Heart left ventricle (tissue), 16 donors: ENCODE measurements at regions of chrX and their contacts with region 1.

Region 1: GRCh38 chrX:19334945-19335626 is 8.6 kb upstream of the PDHA1 start:
- DNase-seq: no peak
- ATAC-seq: no peak
- H3K4me3 ChIP-seq: no peak overlapping the region
- H3K27ac ChIP-seq: no peak overlapping the region
- H3K4me1 ChIP-seq: peaks cover 0 to 10% (median 0%) of the 10 kb centered on the region in 12 donors
- H3K27me3 ChIP-seq: no peaks in the 10 kb centered on the region
- CTCF ChIP-seq: peak in 2 of 12 donors; percentile 9 to 19
- POLR2A ChIP-seq: no peak

Region 2: GRCh38 chrX:18390941-18391538 is 944.0 kb before region 1 on chrX:
- intact Hi-C with region 1: loop called (anchors 1 to 10 kb)
- DNase-seq: peak; percentile 24 to 72 (median 39)
- ATAC-seq: no peak
- H3K4me3 ChIP-seq: no peak overlapping the region
- H3K27ac ChIP-seq: no peak overlapping the region
- H3K4me1 ChIP-seq: no peaks in the 10 kb centered on the region
- H3K27me3 ChIP-seq: no peaks in the 10 kb centered on the region
- CTCF ChIP-seq: peak; percentile 56 to 92 (median 66)
- POLR2A ChIP-seq: no peak

Region 3: GRCh38 chrX:18441780-18442367 is 893.2 kb before region 1 on chrX:
- intact Hi-C with region 1: no loop called
- DNase-seq: no peak
- ATAC-seq: no peak
- H3K4me3 ChIP-seq: no peak overlapping the region
- H3K27ac ChIP-seq: no peak overlapping the region
- H3K4me1 ChIP-seq: peaks cover 0 to 3% (median 0%) of the 10 kb centered on the region in 12 donors
- H3K27me3 ChIP-seq: no peaks in the 10 kb centered on the region
- CTCF ChIP-seq: no peak
- POLR2A ChIP-seq: no peak

Region 4: DNA sequence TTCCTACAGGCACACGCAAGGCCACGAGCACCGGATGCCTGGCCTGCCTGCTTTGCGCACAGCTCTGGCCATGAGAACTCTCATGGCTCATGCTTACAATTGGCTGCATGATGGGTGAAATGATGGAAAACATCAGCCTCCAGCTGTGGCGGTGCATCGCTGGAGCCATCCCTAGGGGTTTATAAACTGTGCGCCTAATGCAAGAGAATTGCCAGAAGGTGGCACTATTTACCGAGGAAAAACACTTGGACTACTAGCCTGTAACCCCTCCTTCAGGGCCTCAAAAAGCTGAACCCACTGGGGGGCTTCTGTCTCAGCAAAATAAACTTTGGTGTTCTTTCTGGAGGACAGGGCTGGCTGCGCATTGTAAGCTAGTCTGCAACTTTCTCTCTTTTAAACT is 403.1 kb before region 1 on chrX:
- intact Hi-C with region 1: loop called in 6 of 10 experiments (anchors 2 to 10 kb)
- DNase-seq: peak in 2 of 5 donors; percentile 15 to 16
- ATAC-seq: peak in 3 of 4 donors; percentile 44 to 53 (median 47)
- H3K4me3 ChIP-seq: no peak overlapping the region
- H3K27ac ChIP-seq: no peak overlapping the region
- H3K4me1 ChIP-seq: no peaks in the 10 kb centered on the region
- H3K27me3 ChIP-seq: no peaks in the 10 kb centered on the region
- CTCF ChIP-seq: peak in 11 of 12 donors; percentile 11 to 54 (median 37)
- POLR2A ChIP-seq: no peak

Region 5: DNA sequence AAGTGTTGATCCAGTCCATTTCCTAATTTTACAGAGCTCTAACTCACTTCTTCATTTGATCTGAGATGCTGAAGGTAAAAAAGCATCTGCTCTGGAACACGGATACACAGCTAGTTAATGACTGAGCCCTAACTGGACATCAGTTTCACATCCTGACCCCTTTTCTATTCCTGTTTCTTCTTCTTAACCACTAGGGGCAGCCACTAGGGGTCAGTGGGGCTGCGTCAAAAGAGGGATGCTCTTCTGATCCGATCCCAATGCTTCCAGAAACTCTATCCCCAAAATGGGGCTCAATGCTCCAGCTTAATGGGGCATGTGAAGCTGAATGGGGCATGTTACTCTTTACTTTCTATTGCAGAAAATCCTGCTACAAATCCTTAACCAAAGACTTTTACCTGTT is 317.8 kb before region 1 on chrX:
- intact Hi-C with region 1: loop called in 5 of 10 experiments (anchors 5 to 10 kb)
- DNase-seq: no peak
- ATAC-seq: peak in 1 of 4 donors; percentile 61
- H3K4me3 ChIP-seq: no peak overlapping the region
- H3K27ac ChIP-seq: no peak overlapping the region
- H3K4me1 ChIP-seq: no peaks in the 10 kb centered on the region
- H3K27me3 ChIP-seq: peaks cover 0 to 5% (median 0%) of the 10 kb centered on the region in 9 donors
- CTCF ChIP-seq: peak in 11 of 12 donors; percentile 19 to 49 (median 40)
- POLR2A ChIP-seq: no peak

Region 6: GRCh38 chrX:19040373-19040772 is 294.7 kb before region 1 on chrX:
- intact Hi-C with region 1: loop called in 1 of 10 experiments (anchors 5 kb)
- DNase-seq: no peak
- ATAC-seq: no peak
- H3K4me3 ChIP-seq: no peak overlapping the region
- H3K27ac ChIP-seq: no peak overlapping the region
- H3K4me1 ChIP-seq: no peaks in the 10 kb centered on the region
- H3K27me3 ChIP-seq: no peaks in the 10 kb centered on the region
- CTCF ChIP-seq: peak in 9 of 12 donors; percentile 12 to 43 (median 29)
- POLR2A ChIP-seq: no peak

Region 7: GRCh38 chrX:19183761-19184477 is 151.2 kb before region 1 on chrX:
- intact Hi-C with region 1: no loop called
- DNase-seq: peak in 1 of 5 donors; percentile 32
- ATAC-seq: peak; percentile 62 to 71 (median 68)
- H3K4me3 ChIP-seq: no peak overlapping the region
- H3K27ac ChIP-seq: no peak overlapping the region
- H3K4me1 ChIP-seq: no peaks in the 10 kb centered on the region
- H3K27me3 ChIP-seq: no peaks in the 10 kb centered on the region
- CTCF ChIP-seq: no peak
- POLR2A ChIP-seq: no peak